HCT116 (cell line): ENCODE measurements at regions of chr3 and their contacts with region 1.

Region 1: DNA sequence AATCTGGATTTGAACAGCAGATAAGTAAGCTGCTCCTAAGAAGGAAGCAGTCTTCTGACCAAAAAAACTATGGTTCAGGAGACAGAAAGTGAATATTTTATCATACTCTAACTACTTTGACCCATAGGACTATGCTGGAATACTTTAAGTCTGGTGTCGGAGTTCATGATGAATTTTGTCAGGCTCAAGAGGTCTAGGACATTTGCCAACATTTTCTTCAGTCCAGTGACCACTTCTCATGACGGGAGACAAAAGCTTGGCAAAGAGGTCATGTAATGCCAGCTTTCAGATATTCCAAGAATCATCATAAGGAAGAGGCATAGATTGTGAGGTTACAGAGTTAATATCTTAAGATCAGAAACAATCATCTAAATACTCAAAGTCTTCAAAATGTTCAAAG is 20.5 kb upstream of the DCBLD2 start:
- DNase-seq: no peak
- ATAC-seq: no peak
- H3K4me3 ChIP-seq: no peak overlapping the region
- H3K27ac ChIP-seq: peak overlapping the region; percentile 97; the same call in 1 of the 2 replicates
- H3K4me1 ChIP-seq: peaks cover 35 to 62% of the 10 kb centered on the region in 2 experiments
- H3K27me3 ChIP-seq: no peaks in the 10 kb centered on the region
- CTCF ChIP-seq: no peak
- POLR2A ChIP-seq: no peak
- RAD21 ChIP-seq: no peak

Region 2: DNA sequence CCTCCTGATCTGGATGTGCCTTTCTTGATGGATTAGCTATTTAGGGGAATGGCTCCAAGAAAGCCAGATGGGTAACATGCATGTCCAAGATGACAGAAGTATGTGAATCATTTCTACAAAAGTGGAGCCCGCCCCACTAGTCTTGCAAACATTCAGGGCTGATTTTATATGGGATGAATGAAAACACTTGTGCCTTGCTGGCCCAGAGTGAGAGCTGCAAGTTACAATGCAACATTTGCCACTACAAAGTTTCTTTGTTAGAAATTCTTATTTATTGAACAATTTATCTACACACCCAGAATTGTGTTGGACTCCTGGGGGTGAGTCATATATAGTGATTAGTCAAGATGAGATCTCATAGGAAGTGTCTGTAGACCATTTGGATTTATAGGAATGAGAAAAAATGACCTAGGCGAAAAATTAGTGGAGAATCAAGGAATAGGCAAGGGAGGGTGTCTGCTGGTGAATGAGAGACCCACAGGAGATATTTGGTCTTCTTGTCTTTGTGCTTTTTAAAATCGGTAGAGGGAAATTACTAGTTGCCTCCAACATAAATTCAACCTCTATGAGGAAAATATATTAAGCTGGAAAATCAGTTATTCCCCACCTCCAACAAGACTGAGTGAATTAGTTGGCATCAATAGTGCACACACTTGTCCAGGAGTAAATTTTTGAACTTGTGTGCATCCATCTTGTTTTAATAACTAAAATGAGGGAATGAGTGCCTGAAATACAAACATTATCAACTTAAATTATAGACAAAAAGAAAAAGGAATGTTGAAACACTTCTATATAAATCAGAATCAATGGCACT is 33.0 kb after region 1 on chr3:
- CTCF ChIA-PET with region 1: no interaction called
- POLR2A ChIA-PET with region 1: interaction called, 4 read pairs
- RAD21 ChIA-PET with region 1: no interaction called
- intact Hi-C with region 1: loop called (anchors 1 kb)
- DNase-seq: peak; percentile 44
- ATAC-seq: peak; percentile 63
- H3K4me3 ChIP-seq: 0 out of 4 replicates have a peak overlapping the region, but pooled peaks of 1 of the 2 experiments have one; percentile 11
- H3K27ac ChIP-seq: peak overlapping the region; percentile 81
- H3K4me1 ChIP-seq: peaks cover 80 to 85% of the 10 kb centered on the region in 2 experiments
- H3K27me3 ChIP-seq: no peaks in the 10 kb centered on the region
- CTCF ChIP-seq: no peak
- POLR2A ChIP-seq: no peak
- RAD21 ChIP-seq: 0 out of 2 replicates have a peak, but pooled peaks have one; percentile 3